ENCODE measurements at regions of chr14 and their contacts with region 1.

Region 1: GRCh38 chr14:106622200-106622745 is 1095.9 kb downstream of the TMEM121 start:
- DNase-seq: no peak
- CTCF ChIP-seq: no peak

Region 2: DNA sequence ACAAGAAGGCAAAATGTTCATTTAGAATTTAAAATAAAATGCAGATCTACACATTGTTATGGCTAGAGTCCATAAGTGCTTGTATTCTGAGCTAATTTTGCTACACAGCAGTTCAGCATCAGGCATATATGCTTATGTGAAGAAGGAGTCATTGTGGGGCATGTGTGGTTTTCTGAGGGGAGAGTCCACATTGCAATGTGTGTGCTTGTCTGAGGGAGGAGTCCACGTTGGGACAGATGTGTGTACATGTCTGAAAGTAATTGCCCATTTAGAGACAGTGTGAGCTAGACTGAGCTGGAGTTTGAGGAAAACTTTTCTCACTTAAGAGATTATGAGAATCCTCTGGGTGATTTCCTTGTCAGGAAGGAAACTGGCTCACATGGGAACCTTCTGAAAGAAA is 327.9 kb before region 1 on chr14:
- CTCF ChIA-PET with region 1: no interaction called
- POLR2A ChIA-PET with region 1: no interaction called
- DNase-seq: no peak
- CTCF ChIP-seq: no peak

Region 3: DNA sequence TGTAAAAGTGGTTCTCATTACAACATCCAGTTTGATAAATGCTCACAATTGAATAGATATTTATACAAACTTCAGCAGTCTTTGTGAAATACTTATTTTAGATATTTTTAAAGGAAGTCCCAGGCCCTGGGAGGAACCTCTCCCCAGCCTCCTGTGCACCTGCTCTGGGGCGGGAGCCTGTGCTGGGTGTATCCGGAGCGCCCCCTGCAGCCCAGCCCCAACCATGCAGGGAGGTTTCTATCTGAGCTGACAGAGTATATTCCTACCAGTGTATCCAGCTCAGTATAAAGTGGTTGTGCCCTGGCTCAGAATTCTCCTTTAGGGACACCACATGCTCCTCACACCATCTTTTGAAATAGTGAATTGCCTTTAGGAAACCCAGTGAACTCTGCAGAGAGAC is 244.1 kb before region 1 on chr14:
- CTCF ChIA-PET with region 1: no interaction called
- POLR2A ChIA-PET with region 1: no interaction called
- DNase-seq: peak; percentile 24
- CTCF ChIP-seq: peak; percentile 77

Region 4: DNA sequence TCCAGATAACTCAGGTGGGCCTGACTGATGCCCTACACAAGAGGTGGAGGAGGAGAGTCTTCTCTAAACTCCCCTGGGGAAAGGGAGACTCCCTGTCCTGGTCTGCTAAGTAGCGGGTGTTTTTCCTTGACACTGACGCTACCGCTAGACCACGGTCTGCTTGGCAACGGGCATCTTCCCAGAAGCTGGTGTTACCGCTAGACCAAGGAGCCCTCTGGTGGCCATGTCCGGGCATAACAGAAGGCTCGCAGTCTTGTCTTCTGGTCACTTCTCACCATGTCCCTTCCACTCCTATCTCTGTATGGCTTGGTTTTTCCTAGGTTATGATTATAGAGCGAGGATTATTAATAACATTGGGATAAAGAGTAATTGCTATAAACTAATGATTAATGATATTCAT is 130.4 kb before region 1 on chr14:
- CTCF ChIA-PET with region 1: interaction called, 13 read pairs
- POLR2A ChIA-PET with region 1: no interaction called
- DNase-seq: no peak
- CTCF ChIP-seq: peak; percentile 28

Region 5: DNA sequence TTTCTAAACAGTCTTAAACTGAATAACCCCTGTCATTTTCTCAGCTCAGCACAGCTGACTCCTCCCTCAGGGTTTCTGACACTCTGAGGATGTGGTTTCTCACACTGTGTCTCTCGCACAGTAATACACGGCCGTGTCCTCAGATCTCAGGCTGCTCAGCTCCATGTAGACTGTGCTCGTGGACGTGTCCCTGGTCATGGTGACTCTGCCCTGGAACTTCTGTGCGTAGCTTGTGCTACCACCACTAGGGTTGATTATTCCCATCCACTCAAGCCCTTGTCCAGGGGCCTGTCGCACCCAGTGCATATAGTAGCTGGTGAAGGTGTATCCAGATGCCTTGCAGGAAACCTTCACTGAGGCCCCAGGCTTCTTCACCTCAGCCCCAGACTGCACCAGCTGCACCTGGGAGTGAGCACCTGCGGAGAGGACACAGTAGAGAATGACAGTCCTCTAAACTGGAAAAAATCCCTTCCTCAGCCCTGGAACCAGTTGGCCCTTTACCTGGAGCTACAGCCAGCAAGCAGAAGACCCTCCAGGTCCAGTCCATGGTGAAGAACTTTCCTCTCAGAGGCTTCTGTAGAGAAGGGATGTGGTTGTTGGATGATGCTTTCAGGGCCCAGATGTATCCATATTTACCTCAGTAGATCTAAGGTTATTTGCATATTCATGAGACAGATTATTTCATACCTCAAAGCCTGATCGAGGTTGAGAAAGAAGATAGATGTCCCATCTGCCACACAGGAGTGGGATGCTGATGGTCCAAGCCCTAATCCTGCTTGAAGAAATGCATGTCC is 111.1 kb before region 1 on chr14:
- CTCF ChIA-PET with region 1: no interaction called
- POLR2A ChIA-PET with region 1: no interaction called
- DNase-seq: no peak
- CTCF ChIP-seq: no peak

Region 6: GRCh38 chr14:106586098-106586704 is 36.1 kb before region 1 on chr14:
- CTCF ChIA-PET with region 1: interaction called, 48 read pairs
- POLR2A ChIA-PET with region 1: no interaction called
- DNase-seq: peak; percentile 75
- CTCF ChIP-seq: peak; percentile 85

Region 7: DNA sequence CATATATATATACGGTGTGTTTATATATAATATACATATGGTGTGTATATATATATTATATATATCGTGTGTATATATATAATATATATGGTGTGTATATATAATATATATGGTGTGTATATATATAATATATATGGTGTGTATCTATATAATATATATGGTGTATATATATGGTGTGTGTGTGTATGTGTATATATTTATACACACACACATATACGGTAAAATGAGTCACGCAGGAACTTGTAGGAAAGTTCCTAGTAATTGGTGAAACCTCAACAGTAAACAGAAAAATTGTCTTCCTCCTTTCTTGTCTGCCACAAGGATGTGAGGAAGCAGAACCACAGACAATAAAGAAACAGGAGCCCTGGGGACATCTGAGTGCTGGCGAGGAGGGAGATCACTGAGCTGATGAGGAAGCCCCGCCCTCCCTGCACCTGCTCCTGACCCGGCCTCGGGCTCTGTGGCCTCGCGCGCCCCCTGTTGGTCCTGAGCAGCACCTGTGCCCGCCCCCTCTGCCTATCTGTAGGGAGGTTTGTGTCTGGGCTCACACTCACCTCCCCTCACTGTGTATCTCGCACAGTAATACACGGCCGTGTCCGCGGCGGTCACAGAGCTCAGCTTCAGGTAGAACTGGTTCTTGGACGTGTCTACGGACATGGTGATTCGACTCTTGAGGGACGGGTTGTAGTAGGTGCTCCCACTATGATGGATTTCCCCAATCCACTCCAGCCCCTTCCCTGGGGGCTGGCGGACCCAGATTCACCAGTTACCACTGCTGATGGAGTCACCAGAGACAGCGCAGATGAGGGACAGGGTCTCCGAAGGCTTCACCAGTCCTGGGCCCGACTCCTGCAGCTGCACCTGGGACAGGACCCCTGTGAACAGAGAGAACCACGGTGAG is 16.5 kb before region 1 on chr14:
- CTCF ChIA-PET with region 1: interaction called, 104 read pairs
- POLR2A ChIA-PET with region 1: no interaction called
- DNase-seq: peak; percentile 74
- CTCF ChIP-seq: peak; percentile 90

Region 8: DNA sequence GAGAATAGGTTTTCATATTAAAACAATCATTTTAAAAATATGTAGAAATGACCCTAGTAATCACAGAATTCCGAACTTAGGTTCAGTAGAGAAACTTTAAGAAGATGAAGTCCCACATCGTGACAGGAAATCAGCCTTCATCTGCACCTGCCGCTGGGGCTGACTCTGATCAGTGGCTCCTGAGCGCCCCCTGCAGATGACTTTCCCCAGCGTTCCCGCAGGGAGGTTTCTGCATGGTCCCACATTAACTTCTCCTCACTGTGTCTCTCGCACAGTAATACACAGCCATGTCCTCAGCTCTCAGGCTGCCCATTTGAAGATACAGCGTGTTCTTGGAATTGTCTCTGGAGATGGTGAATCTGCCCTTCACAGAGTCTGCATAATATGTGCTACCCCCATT is 35.2 kb after region 1 on chr14:
- CTCF ChIA-PET with region 1: interaction called, 17 read pairs
- POLR2A ChIA-PET with region 1: no interaction called
- DNase-seq: peak; percentile 22
- CTCF ChIP-seq: peak; percentile 75

Region 9: DNA sequence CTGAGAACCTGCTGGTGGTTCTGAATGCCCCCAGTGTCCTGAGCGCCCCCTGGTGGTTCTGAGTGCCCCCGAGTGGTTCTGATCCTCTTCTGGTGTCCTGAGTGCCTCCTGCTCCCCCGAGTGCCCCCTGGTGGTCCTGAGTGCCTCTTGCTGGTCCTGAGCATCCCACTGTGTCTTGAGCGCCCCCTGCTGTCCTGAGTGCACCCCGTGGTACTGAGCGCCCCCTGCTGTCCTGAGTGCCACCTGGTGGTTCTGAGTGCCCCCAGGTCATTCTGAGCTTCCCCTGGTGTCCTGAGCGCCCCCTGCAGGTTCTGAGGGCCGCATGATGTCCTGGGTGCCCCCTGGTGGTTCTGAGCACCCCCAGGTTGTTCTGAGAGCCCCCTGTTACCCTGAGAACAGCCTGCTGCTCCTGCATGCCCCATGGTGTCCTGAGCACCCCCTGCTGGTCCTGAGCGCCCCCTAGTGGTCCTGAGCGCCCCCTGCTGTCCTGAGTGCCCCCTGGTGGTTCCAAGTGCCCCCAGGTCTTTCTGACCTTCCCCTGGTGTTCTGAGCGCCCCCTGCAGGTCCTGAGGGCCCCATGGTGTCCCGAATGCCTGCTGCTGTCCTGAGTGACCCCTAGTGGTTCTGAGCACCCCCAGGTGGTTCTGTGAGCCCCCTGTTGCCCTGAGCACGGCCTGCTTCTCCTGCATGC is 69.5 kb after region 1 on chr14:
- CTCF ChIA-PET with region 1: interaction called, 18 read pairs
- POLR2A ChIA-PET with region 1: no interaction called
- DNase-seq: peak; percentile 78
- CTCF ChIP-seq: peak; percentile 100